PC-9 (cell line): ENCODE measurements at regions of chr14 and their contacts with region 1.

Region 1: GRCh38 chr14:34539407-34540180 is at the start of gene EAPP:
- DNase-seq: peak; percentile 86 to 90
- H3K4me3 ChIP-seq: peak within 1 kb of the TSS; percentile 84
- H3K27ac ChIP-seq: peak within 1 kb of the TSS; percentile 75
- H3K4me1 ChIP-seq: no peaks in the 10 kb centered on the region
- H3K27me3 ChIP-seq: no peaks in the 10 kb centered on the region
- CTCF ChIP-seq: no peak
- total RNA-seq, gene EAPP: 23.2 and 27.2 TPM in 2 replicates

Region 2: DNA sequence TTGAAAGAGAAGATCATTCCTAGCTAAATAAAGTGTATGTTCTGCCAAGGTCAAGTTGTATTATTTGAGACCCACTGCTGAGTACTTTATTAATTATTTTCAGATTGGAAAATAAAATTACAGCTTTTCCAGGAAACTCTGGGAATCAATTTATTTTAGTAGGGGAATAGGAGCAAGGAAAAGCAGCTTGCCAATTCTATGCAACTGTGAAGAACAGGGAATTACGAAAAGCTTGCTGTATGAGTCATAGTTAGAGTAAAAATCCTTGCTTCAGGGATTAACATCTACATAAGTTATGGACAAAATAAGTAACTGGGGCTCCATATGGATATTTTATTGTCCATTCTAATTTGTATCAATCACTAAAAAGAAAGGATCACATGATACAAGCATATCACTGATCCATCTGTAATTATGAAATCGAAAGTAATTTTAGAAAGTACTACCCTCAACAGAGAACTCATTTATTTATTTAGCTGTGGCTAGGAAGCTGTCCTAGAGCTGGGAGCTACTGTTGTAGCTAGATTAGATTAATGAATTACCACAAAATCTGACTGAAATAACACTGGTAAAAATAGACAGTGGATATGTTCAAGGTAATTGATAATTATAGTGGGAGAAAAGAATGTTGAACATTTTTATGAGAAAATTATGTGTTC is 1904.4 kb before region 1 on chr14:
- CTCF ChIA-PET with region 1: no interaction called
- POLR2A ChIA-PET with region 1: interaction called, 12 read pairs
- intact Hi-C with region 1: no loop called
- DNase-seq: no peak
- H3K4me3 ChIP-seq: no peak overlapping the region
- H3K27ac ChIP-seq: no peak overlapping the region
- H3K4me1 ChIP-seq: no peaks in the 10 kb centered on the region
- H3K27me3 ChIP-seq: no peaks in the 10 kb centered on the region
- CTCF ChIP-seq: no peak